ENCODE measurements at regions of chr3 and their contacts with region 1.

Region 1: DNA sequence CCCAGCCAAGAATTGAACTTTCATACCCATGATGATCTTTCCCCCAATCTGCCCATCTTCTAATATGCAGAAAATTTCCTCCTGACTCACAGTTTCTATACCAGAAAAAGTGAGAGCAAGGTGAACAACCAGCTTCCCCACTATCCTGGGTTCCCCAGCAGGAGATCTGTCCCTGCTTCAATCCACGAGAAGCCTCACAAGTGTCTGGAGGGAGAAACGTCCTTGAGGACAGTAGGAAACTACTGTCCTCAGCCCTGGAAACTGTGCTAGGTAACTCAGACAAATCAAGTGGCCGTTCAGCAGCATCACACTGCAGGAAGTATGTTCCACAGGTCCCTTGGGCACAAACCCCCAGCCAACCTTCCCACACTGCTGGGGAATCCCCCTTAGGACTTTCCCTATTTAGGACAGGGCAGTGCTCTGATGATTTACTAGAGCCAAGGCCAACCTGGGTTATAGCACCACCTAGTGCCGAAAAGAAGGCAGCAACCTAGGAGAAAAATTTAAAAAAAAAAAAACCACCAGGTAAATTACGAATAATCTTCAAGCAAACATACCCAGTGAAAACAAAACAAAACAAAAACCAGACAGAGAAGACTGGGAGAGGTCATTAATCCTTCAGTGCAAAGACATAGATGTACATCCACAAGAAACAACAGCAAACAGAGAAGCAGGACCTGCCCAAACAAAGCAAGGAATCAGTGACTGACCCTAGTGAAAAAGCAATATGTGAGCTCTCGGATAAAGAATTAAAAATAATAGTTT is 36.0 kb downstream of the MORC1 start:
- DNase-seq: no peak
- H3K4me3 ChIP-seq: no peak overlapping the region
- CTCF ChIP-seq: peak; percentile 27

Region 2: GRCh38 chr3:109023656-109024254 is 58.2 kb before region 1 on chr3:
- CTCF ChIA-PET with region 1: interaction called, 13 read pairs
- POLR2A ChIA-PET with region 1: no interaction called
- DNase-seq: peak; percentile 5
- H3K4me3 ChIP-seq: no peak overlapping the region
- CTCF ChIP-seq: peak; percentile 59

Region 3: DNA sequence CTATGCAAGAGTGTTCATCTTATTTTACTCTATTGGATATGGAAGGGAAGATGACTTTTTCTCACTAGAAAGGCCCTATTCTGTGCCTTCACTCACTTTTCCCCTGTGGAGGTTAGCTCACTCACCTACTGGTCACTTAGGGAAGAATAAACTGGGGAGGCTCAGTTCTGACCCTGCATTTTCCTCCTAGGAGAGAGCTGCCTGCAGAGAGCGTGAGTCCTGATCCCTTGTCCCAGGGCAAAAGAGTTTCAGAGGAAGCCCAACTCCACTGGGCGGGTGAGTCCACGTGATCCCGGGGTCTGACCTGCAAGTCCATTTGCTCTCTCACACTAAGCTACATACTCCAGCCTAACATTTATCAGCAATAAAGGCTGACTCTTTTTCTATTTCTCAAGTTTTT is 27.6 kb after region 1 on chr3:
- CTCF ChIA-PET with region 1: no interaction called
- POLR2A ChIA-PET with region 1: no interaction called
- DNase-seq: no peak
- H3K4me3 ChIP-seq: no peak overlapping the region
- CTCF ChIP-seq: no peak